ENCODE measurements at regions of chr15 and their contacts with region 1.

Region 1: GRCh38 chr15:57146506-57147201 is 228.2 kb downstream of the TCF12 start:
- DNase-seq: peak; percentile 21
- H3K4me3 ChIP-seq: no peak overlapping the region
- H3K27ac ChIP-seq: peak overlapping the region in 1 of 2 experiments; percentile 41; a peak in 1 of 4 replicates
- H3K4me1 ChIP-seq: peaks cover 3 to 42% of the 10 kb centered on the region in 2 experiments; a peak in 3 of 4 replicates
- H3K27me3 ChIP-seq: no peaks in the 10 kb centered on the region
- CTCF ChIP-seq: peak; percentile 91
- EP300 ChIP-seq: no peak
- RAD21 ChIP-seq: peak; percentile 86

Region 2: DNA sequence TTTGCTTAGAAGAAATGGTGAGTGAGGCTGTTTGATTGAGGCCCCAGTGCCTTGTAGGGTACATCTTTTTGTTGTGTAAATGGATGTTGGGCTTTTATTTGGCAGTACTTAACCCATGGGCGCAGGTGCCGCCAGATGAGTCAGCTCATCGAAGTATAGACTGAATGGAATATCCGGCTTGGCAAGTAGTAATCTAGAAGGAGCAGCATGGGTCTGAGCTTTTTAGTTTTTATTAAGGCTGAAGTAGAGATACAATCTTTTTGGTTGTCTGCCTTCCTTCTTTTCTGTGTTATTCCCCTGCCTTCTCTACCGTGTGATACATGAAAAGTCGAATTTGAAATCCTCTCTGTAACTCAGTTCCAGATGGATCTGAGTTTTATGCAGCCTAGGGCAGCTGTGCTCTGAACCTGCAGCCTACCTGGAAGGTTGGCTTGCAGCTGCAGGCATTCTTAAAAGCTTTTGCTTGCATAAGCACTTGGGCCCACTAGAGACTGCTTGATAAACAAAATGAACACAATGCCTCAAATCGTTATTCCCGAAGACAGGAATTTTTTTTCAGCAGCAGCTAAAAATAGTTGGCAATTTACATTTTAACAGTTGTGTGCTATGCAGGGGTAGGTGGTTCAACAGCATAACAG is 52.1 kb after region 1 on chr15:
- CTCF ChIA-PET with region 1: interaction called, 11 read pairs
- POLR2A ChIA-PET with region 1: interaction called, 3 read pairs
- DNase-seq: peak; percentile 4
- H3K4me3 ChIP-seq: no peak overlapping the region
- H3K27ac ChIP-seq: peak overlapping the region; percentile 43 to 68; a peak in 3 of 4 replicates
- H3K4me1 ChIP-seq: peaks cover 6 to 11% of the 10 kb centered on the region in 2 experiments; a peak in 3 of 4 replicates
- H3K27me3 ChIP-seq: no peaks in the 10 kb centered on the region
- CTCF ChIP-seq: no peak
- EP300 ChIP-seq: no peak
- RAD21 ChIP-seq: no peak

Region 3: DNA sequence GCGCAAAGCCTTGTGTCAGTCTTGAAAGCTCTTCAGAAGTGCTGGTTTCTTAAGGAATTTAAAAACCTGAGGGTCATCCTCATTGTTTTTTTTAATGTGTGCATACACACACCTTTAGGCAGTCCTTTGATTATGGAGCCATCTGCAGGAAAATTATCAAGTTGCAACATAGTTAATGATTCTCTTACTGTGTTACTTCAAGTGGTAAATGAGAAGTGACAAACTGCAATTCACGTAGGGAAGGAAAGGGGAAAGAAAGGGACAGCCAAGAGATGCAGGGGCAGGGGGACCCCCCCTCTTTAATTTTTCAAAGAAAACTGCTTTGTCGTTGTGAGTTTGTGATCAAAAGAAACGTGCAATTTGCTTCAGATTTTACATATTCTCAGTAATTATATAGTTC is 67.2 kb after region 1 on chr15:
- CTCF ChIA-PET with region 1: interaction called, 89 read pairs
- POLR2A ChIA-PET with region 1: no interaction called
- DNase-seq: peak; percentile 3
- H3K4me3 ChIP-seq: no peak overlapping the region
- H3K27ac ChIP-seq: no peak overlapping the region
- H3K4me1 ChIP-seq: peaks cover 28 to 31% of the 10 kb centered on the region in 2 experiments; a peak in 3 of 4 replicates
- H3K27me3 ChIP-seq: no peaks in the 10 kb centered on the region
- CTCF ChIP-seq: peak; percentile 67
- EP300 ChIP-seq: no peak
- RAD21 ChIP-seq: peak; percentile 89

Region 4: DNA sequence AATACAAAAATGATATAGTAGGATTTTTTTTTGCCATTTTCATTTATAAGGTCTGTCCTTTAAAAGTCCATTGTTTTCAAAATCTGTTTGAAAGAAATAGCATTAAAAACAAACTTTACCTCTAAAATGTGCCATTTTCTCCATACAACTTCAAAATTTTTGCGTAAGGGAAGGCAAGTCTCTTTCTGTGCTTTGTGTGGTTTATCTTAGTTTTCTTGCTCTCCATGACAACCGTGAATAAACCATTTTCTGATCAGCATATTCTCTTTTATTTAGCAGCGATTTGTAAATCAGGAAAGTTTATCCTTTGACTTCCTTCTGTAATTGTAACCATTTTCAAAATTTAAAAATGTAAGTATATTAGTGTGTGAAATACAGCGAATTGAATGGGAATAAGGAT is 81.7 kb after region 1 on chr15:
- CTCF ChIA-PET with region 1: no interaction called
- POLR2A ChIA-PET with region 1: no interaction called
- DNase-seq: no peak
- H3K4me3 ChIP-seq: no peak overlapping the region
- H3K27ac ChIP-seq: peak overlapping the region; percentile 42 to 91; a peak in 3 of 4 replicates
- H3K4me1 ChIP-seq: peaks cover 37 to 39% of the 10 kb centered on the region in 2 experiments; a peak in 3 of 4 replicates
- H3K27me3 ChIP-seq: no peaks in the 10 kb centered on the region
- CTCF ChIP-seq: no peak
- EP300 ChIP-seq: no peak
- RAD21 ChIP-seq: no peak

Region 5: DNA sequence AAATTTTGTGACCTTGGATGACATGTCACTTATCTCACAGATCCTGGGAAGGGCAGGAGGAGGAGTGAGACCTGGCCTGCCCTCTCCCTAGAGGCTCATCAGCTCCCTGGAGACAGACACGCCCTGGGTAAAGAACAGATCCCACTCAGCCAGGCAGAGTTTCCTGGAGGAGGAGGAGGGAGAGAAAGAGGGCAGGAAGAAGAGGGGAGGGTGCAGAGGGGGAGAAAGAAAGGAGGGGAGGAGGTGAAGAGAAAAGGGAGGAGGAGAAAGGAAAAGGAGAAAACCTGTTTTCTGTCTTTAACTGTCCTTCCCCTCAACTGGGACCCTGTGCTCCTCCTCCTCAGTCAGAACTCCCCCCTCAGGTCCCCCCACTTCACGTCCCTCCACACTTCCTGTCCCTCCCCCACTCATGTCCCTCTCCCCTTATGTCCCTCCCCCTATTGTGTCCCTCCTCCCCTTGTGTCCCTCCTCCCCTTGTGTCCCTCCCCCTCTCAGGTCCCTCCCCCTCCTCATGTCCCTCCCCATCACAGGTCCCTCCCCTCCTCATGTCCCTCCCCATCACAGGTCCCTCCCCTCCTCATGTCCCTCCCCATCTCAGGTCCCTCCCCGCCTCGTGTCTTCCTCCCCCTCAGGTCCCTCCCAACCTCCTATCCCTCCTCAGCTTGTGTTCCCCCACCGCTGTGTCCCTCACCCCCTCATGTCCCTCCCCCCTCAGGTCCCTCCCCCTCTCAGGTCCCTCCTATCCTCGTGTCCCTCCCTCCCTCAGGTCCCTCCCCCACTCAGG is 177.3 kb after region 1 on chr15:
- CTCF ChIA-PET with region 1: interaction called, 12 read pairs
- POLR2A ChIA-PET with region 1: no interaction called
- DNase-seq: peak; percentile 62
- H3K4me3 ChIP-seq: no peak overlapping the region
- H3K27ac ChIP-seq: peak overlapping the region; percentile 53 to 73; a peak in 3 of 4 replicates
- H3K4me1 ChIP-seq: peaks cover 8 to 41% of the 10 kb centered on the region in 2 experiments; a peak in 2 of 4 replicates
- H3K27me3 ChIP-seq: no peaks in the 10 kb centered on the region
- CTCF ChIP-seq: no peak
- EP300 ChIP-seq: no peak
- RAD21 ChIP-seq: no peak

Measured in SK-N-SH (cell line).